ENCODE measurements at regions of chr19 and their contacts with region 1.

Region 1: GRCh38 chr19:29680447-29680846 is 15.2 kb downstream of the PLEKHF1 start:
- DNase-seq: peak; percentile 85 to 92
- ATAC-seq: peak; percentile 75 to 91 (median 86)
- H3K4me3 ChIP-seq: no peak overlapping the region
- H3K4me3 Mint-ChIP-seq: peak overlapping the region; percentile 87
- H3K27ac ChIP-seq: peak overlapping the region; percentile 46
- H3K27ac Mint-ChIP-seq: peak overlapping the region; percentile 86 to 98
- H3K4me1 ChIP-seq: peaks cover 78% of the 10 kb centered on the region
- H3K4me1 Mint-ChIP-seq: peaks cover 61 to 82% of the 10 kb centered on the region in 2 donors
- H3K27me3 ChIP-seq: no peaks in the 10 kb centered on the region
- H3K27me3 Mint-ChIP-seq: no peaks in the 10 kb centered on the region
- CTCF ChIP-seq: no peak

Region 2: DNA sequence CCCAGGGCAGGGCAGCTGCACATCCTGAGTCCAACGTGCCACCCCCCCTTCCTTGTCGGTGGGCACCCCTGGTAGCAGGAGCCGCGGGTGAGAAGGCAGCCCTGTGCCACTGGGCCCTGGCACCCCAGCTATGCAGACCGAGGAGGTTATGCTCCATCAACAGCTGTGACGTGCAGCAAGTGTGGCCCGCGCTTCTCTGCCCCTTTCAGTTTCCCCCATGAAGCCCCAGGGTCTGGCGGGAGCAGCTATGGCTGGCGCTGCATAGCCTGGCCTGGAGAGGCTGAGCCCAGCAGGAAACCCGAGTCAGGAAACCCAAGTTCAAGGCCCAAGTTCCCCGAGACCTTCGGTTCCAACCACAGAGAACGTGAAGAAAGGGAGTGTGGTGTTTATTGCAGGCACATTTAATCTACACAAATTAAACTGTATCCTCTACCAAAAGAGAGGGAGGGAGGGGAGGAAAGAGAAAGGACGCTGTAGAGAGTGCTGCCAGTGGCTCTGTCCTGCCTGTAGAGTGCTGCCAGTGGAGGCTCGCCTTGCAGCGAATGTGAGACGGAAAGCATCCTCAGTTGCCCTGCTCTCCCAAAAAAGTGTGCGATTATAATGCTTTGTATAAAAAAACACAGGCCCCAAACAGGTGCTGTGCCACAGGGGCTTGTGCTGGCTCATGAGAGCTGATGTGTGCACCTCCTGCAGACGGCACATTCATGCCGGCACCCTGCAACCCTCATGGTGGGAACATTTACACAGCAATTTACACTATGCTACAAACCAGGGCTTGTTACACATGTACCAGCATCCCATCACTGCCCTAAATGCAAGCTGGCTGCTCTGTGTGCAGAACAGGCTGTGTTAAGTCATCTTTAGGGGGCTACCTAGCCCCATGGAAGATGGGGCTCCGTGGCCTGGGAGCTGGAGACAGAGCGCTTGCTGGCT is 58.0 kb before region 1 on chr19:
- intact Hi-C with region 1: loop called (anchors 2 kb)
- DNase-seq: peak; percentile 46 to 65
- ATAC-seq: peak; percentile 74 to 79 (median 78)
- H3K4me3 ChIP-seq: no peak overlapping the region
- H3K4me3 Mint-ChIP-seq: peak overlapping the region; percentile 73
- H3K27ac ChIP-seq: peak overlapping the region; percentile 50
- H3K27ac Mint-ChIP-seq: peak overlapping the region; percentile 65 to 96
- H3K4me1 ChIP-seq: peaks cover 61% of the 10 kb centered on the region
- H3K4me1 Mint-ChIP-seq: peaks cover 49 to 59% of the 10 kb centered on the region in 2 donors
- H3K27me3 ChIP-seq: no peaks in the 10 kb centered on the region
- H3K27me3 Mint-ChIP-seq: no peaks in the 10 kb centered on the region
- CTCF ChIP-seq: no peak

Measured in natural killer cell (primary cell).